CD14-positive monocyte (primary cell): ENCODE measurements at regions of chr1 and their contacts with region 1.

Region 1: DNA sequence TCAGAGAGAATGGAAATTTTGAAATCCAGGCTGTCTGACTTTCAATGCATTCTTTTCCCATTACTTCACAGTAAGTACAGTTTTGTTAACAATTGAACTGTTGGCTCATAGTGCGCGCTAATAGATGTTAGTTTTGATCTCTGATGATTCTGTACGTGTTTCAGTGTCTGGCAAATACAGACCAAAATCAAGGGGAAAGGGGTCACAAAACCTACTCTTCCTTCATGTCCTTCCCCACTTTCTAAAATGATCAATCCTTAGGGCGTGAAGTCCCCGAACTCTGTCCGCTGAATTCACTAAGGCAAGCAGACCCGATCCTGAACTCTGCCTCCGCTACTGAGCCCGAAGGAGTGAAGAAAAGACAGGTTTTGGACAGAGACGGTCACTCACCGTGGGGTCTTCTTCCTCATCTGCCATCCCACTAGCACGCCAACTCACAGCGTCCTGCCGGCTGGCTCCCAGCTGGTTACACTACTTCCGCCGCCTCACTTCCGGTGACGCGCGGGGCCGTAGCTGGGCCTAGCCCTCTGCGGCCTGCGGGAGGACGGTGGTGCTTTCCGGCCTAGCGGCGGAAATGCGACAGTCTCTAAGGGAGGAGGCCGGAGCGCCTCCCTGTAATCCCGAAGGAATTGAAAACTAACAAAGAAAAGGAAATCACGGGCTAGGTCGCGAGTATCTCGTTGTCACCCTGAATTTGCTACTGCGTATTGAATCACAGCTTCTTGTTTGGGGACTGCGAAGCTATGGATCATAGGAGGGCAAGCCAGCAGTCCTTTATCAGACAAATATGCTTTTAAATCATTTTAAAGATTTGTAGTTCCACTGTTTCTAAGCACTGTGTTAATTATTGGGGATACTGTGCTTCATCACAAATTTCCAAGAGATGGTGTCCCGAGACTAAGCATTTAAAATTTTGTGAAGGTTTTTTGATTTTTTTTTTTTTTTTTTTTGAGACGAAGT is at the start of gene TAF13:
- DNase-seq: peak; percentile 93 to 97 (median 95)
- H3K4me3 ChIP-seq: peak within 1 kb of the TSS; percentile 91 to 99 (median 94)
- H3K4me3 Mint-ChIP-seq: peak within 1 kb of the TSS; percentile 95 to 99
- H3K27ac ChIP-seq: peak within 1 kb of the TSS; percentile 83 to 99
- H3K27ac Mint-ChIP-seq: peak within 1 kb of the TSS; percentile 99 to 100 (median 99)
- H3K4me1 ChIP-seq: peaks cover 16 to 27% of the 10 kb centered on the region in 2 donors
- H3K4me1 Mint-ChIP-seq: peaks cover 18% of the 10 kb centered on the region
- H3K27me3 ChIP-seq: no peaks in the 10 kb centered on the region
- H3K27me3 Mint-ChIP-seq: peaks cover 0 to 3% (median 3%) of the 10 kb centered on the region in 3 donors
- CTCF ChIP-seq: no peak
- polyA plus RNA-seq, gene TAF13: 1.2 to 17.7 (median 5.2) TPM

Region 2: GRCh38 chr1:108972951-108973350 is 102.9 kb before region 1 on chr1:
- intact Hi-C with region 1: no loop called
- DNase-seq: no peak
- H3K4me3 ChIP-seq: no peak overlapping the region
- H3K4me3 Mint-ChIP-seq: no peak overlapping the region
- H3K27ac ChIP-seq: no peak overlapping the region
- H3K27ac Mint-ChIP-seq: peak overlapping the region in 2 of 7 donors; percentile 20 to 63
- H3K4me1 ChIP-seq: no peaks in the 10 kb centered on the region
- H3K4me1 Mint-ChIP-seq: no peaks in the 10 kb centered on the region
- H3K27me3 ChIP-seq: no peaks in the 10 kb centered on the region
- H3K27me3 Mint-ChIP-seq: no peaks in the 10 kb centered on the region
- CTCF ChIP-seq: no peak

Region 3: DNA sequence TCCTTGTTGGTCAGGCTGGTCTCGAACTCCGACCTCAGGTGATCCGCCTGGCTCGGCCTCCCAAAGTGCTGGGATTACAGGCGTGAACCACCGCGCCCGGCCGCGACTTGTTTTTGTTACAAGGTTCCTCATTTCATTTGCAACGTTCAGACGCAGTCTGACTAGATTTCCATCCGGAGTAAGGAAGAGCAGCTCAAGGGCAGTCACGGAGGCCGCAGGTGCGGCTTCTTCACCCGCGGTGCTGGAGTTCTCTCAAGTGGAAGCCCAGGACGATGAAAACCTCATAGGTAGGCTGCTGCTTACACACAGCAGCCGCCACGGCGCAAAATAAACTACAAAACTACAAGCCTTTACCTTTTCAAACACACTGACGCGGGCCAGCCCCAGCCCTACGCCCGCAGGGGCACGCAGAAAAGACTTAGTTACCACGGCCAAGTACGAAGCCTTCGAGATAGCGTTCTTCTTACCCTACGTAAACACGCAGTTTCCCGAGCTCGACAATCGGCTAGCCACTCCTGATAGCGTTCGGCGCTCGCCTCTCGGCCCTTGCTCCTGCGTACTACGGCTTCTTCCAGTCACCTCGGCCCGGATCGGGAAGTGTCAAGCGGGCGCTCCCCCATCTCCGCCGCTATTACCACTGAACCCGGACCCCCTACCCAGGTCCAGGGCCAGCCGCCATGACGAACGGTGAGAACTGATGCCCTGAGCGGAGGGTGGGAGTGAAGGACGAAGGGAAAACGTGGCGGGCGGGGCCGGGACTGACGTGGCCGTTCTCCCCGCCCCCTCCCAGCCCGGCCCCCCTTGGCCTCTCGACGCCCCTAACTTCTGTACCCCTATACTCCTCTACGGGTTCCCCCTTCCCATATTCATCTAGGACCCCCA is 14.6 kb after region 1 on chr1 and contains the start of gene TMEM167B:
- intact Hi-C with region 1: loop called in 1 of 2 experiments (anchors 2 kb)
- DNase-seq: peak; percentile 86 to 92 (median 92)
- H3K4me3 ChIP-seq: peak within 1 kb of the TSS; percentile 80 to 97 (median 81)
- H3K4me3 Mint-ChIP-seq: peak within 1 kb of the TSS; percentile 86 to 98
- H3K27ac ChIP-seq: peak within 1 kb of the TSS; percentile 96 to 98
- H3K27ac Mint-ChIP-seq: peak within 1 kb of the TSS; percentile 98 to 99 (median 99)
- H3K4me1 ChIP-seq: peaks cover 35 to 44% of the 10 kb centered on the region in 2 donors
- H3K4me1 Mint-ChIP-seq: peaks cover 41% of the 10 kb centered on the region
- H3K27me3 ChIP-seq: no peaks in the 10 kb centered on the region
- H3K27me3 Mint-ChIP-seq: peaks cover 0 to 2% (median 0%) of the 10 kb centered on the region in 3 donors
- CTCF ChIP-seq: no peak
- polyA plus RNA-seq, gene TMEM167B: 39.2 to 50.8 (median 43.3) TPM